HepG2 (cell line): ENCODE measurements at regions of chr20 and their contacts with region 1.

Region 1: DNA sequence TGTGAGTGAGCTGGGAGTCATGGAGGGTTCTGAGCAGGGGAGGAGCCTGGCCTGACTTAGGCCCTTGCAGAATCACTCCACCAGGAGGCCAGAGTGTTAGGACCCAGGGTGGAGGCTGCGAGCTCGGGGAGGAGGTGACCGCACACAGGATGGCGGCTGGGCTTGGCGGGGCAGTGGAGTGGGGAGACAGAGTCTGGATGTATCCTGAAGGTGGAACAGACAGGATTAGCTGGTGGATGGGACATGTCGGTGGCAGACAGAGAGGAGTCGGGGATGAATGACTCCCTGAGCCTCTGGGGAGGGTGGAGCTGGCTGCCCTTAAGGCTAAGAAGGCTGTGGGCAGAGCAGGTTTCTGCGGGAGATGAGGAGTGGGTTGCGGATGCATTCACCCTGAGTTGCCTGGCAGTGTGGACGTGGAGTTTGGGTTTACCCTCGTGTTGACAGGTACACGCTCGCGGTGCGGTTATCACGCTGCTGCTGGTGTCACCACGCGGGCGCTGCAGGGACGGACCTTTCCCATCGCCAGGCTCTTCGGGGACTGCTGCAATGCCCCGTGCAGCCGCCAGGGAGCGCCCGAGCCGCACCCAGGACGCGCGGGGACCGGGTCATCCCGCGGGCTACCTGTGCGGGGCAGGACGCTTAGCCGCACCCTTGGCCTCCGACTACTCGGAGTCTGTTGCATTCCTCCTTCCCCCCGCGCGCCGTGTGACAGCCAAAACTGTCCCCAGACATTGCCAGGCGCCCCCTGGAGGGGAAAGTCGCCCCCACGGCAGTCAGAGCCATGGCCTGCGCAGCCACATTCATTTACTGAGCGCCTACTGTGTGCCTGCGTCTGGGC is 43.0 kb upstream of the PTGIS start:
- DNase-seq: peak; percentile 87
- ATAC-seq: peak; percentile 82
- H3K4me3 ChIP-seq: peak overlapping the region; percentile 58 to 84 (median 63)
- H3K27ac ChIP-seq: no peak overlapping the region
- H3K4me1 ChIP-seq: peaks cover 67% of the 10 kb centered on the region
- H3K27me3 ChIP-seq: no peaks in the 10 kb centered on the region; a peak in 1 of 5 replicates
- CTCF ChIP-seq: peak; percentile 100
- EP300 ChIP-seq: peak; percentile 3 to 54; a peak in 1 of 4 replicates
- POLR2A ChIP-seq: no peak
- RAD21 ChIP-seq: peak; percentile 100

Region 2: GRCh38 chr20:49330544-49331239 is 280.2 kb before region 1 on chr20:
- CTCF ChIA-PET with region 1: interaction called, 14 read pairs
- POLR2A ChIA-PET with region 1: no interaction called
- in situ Hi-C with region 1: loop called (anchors 5 kb)
- intact Hi-C with region 1: loop called (anchors 10 kb)
- DNase-seq: no peak
- ATAC-seq: no peak
- H3K4me3 ChIP-seq: no peak overlapping the region
- H3K27ac ChIP-seq: no peak overlapping the region
- H3K4me1 ChIP-seq: no peaks in the 10 kb centered on the region
- H3K27me3 ChIP-seq: peaks cover 5 to 46% of the 10 kb centered on the region in 2 experiments; a peak in 4 of 5 replicates
- CTCF ChIP-seq: no peak
- EP300 ChIP-seq: no peak
- POLR2A ChIP-seq: no peak
- RAD21 ChIP-seq: no peak

Region 3: DNA sequence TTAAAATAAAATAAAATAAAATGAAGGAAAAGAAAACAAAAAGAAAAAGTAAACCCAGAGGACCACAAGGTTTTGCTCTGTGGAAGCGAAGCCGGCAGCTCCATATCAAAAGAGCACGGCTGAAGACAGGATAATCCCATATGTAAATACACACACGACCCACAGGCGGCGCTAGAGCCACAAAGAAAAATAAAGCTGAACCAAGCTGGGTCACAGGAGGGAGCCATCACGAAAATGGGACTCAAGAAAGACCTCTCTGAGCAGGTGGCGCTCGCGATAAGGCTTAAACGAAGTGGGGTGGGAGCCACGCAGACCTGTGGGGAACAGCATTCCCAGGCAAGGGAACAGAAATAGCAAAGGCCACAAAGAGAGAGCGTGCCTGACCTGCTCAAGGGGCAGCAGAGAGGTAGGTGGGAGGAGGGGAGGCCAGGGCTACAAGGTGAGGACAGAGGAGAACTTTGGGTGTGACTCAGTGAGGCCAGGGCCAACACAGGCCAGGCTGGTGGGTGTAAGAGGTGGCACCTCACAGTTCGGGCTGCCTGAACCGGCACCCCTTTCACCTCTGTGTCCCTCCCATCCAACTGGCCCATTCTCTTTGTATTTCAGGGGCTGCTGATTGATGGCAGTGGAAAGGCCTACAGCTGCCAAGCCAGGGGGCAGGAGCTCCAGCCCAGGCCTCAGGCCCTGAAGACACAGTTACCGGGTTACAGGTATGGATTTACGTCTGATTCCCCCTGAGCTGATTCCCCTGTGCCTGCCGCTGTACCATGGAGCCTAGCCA is 69.0 kb before region 1 on chr20:
- CTCF ChIA-PET with region 1: interaction called, 282 read pairs
- POLR2A ChIA-PET with region 1: interaction called, 13 read pairs
- in situ Hi-C with region 1: loop called (anchors 5 kb)
- intact Hi-C with region 1: loop called (anchors 1 kb)
- DNase-seq: peak; percentile 90
- ATAC-seq: peak; percentile 78
- H3K4me3 ChIP-seq: no peak overlapping the region
- H3K27ac ChIP-seq: no peak overlapping the region
- H3K4me1 ChIP-seq: peaks cover 13% of the 10 kb centered on the region
- H3K27me3 ChIP-seq: peaks cover 5 to 19% of the 10 kb centered on the region in 2 experiments; a peak in 3 of 5 replicates
- CTCF ChIP-seq: peak; percentile 99
- EP300 ChIP-seq: 0 out of 4 replicates have a peak, but pooled peaks of 1 of the 2 experiments have one; percentile 8
- POLR2A ChIP-seq: no peak
- RAD21 ChIP-seq: peak; percentile 97

Region 4: DNA sequence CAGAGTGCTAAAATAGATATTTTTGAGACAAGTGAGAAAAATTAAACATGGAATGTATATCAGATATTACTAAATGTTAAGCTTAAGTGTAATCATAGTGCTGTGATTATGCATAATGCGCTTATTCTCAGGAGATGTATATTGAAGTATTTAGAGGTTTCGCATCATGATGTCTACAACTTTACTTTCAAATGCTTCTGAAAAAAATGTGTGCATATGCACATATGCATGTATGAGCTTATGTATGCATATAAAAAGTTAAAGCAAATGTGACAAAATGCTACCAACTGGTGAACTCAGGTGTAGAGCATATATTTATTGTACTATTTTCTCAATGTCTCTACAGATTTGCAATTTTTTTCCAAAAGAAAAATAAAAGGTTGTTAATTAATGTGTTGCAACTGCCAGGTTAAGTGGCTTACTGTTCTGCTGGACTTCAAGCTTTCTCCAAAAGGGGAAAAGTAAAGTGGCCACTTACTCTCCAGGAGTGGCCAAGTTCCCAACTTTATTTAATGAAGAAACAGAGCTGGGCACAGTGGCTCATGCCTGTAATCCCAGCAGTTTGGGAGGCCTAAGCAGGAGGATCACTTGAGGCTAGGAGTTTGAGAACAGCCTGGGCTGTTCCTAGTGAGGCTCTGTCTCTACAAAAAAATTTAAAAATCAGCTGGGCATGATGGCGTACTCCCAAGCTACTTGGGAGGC is 53.8 kb after region 1 on chr20:
- CTCF ChIA-PET with region 1: no interaction called
- POLR2A ChIA-PET with region 1: no interaction called
- in situ Hi-C with region 1: no loop called
- intact Hi-C with region 1: no loop called
- DNase-seq: no peak
- ATAC-seq: no peak
- H3K4me3 ChIP-seq: no peak overlapping the region
- H3K27ac ChIP-seq: no peak overlapping the region
- H3K4me1 ChIP-seq: peaks cover 43% of the 10 kb centered on the region
- H3K27me3 ChIP-seq: no peaks in the 10 kb centered on the region
- CTCF ChIP-seq: no peak
- EP300 ChIP-seq: no peak
- POLR2A ChIP-seq: no peak
- RAD21 ChIP-seq: no peak

Region 5: DNA sequence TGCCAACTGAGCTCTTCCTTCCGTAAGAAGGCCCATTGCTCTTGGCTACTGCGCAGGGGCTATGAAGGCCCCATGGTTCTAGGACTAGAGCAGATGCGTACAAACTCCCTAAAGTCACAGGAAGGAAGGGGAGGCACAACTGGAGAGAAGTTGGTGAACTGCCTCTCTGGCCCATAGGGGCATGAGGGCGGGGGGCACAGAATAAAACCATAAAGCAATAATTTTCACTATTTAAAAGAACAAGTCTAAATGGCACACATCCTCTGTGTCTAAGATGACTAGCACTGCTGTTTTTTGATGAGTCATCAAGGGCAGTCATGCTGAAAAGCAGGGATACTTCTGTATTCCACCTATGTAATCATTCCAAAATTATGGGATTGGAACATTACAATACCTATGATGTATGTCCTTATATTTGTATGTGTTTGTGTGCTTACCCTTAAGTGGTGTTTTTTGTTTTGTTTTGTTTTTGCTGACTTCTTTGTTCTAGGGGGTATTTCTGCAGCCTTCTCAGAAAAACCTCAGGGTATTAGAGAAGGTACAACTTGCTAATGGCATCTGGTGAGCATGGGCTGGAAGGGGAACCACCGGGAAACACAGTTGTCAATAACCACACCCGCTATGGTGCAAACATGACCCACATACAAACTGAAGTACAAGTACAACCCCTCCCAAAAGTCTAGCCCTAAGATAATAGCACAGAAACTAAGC is 65.8 kb after region 1 on chr20:
- CTCF ChIA-PET with region 1: interaction called, 14 read pairs
- POLR2A ChIA-PET with region 1: interaction called, 7 read pairs
- in situ Hi-C with region 1: no loop called
- intact Hi-C with region 1: loop called (anchors 1 kb)
- DNase-seq: peak; percentile 50
- ATAC-seq: no peak
- H3K4me3 ChIP-seq: peak overlapping the region in 1 of 3 experiments; percentile 6; a peak in 1 of 6 replicates
- H3K27ac ChIP-seq: peak overlapping the region; percentile 93
- H3K4me1 ChIP-seq: peaks cover 96% of the 10 kb centered on the region
- H3K27me3 ChIP-seq: no peaks in the 10 kb centered on the region
- CTCF ChIP-seq: no peak
- EP300 ChIP-seq: 0 out of 4 replicates have a peak, but pooled peaks of 1 of the 2 experiments have one; percentile 21
- POLR2A ChIP-seq: no peak
- RAD21 ChIP-seq: no peak

Region 6: GRCh38 chr20:49812463-49813304 is 201.8 kb after region 1 on chr20 and contains the start of gene SLC9A8:
- CTCF ChIA-PET with region 1: interaction called, 11 read pairs
- POLR2A ChIA-PET with region 1: interaction called, 10 read pairs
- in situ Hi-C with region 1: no loop called
- intact Hi-C with region 1: loop called (anchors 1 kb)
- DNase-seq: peak; percentile 84
- ATAC-seq: peak; percentile 96
- H3K4me3 ChIP-seq: peak within 1 kb of the TSS; percentile 85 to 96 (median 95)
- H3K27ac ChIP-seq: peak within 1 kb of the TSS; percentile 77
- H3K4me1 ChIP-seq: peaks cover 31% of the 10 kb centered on the region
- H3K27me3 ChIP-seq: no peaks in the 10 kb centered on the region; a peak in 1 of 5 replicates
- CTCF ChIP-seq: peak; percentile 53
- EP300 ChIP-seq: peak in 1 of 2 experiments; percentile 46; a peak in 2 of 4 replicates
- POLR2A ChIP-seq: peak; percentile 74 to 91
- RAD21 ChIP-seq: peak; percentile 77
- total RNA-seq, gene SLC9A8: 2.6 and 7.4 TPM in 2 replicates

Region 7: DNA sequence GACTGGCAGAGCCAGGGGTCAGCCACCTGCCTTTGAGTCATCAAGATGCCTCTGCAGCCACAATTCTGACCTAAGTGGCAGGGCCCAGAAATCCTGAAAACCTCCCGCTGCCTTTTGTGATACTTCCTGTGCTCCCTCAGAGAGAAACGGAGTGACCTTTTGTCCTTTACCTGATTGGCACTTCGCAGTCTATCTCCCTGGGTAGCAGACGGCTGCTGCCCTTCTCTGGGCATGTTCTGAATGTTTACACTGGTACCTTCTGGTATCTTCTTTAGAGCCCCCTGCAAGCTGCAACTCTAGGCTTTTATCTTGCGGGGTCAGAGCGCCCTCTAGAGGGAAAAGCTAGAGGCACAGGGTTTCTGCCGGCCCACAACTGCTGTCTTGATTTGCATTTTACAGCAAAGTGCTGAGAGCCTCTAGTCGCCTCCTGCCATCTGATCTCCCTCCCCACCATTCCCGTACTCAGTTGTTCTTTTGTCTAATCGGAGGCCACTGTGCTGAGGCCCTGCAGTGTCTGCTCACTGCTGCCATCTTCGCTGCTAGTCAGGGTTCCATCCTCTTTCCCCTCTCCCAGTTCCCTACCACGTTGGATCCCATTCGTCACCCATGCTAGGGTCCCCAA is 277.5 kb after region 1 on chr20:
- CTCF ChIA-PET with region 1: interaction called, 74 read pairs
- POLR2A ChIA-PET with region 1: no interaction called
- in situ Hi-C with region 1: loop called (anchors 5 kb)
- intact Hi-C with region 1: loop called (anchors 1 kb)
- DNase-seq: peak; percentile 69
- ATAC-seq: peak; percentile 66
- H3K4me3 ChIP-seq: no peak overlapping the region
- H3K27ac ChIP-seq: no peak overlapping the region
- H3K4me1 ChIP-seq: peaks cover 14% of the 10 kb centered on the region
- H3K27me3 ChIP-seq: no peaks in the 10 kb centered on the region
- CTCF ChIP-seq: peak; percentile 89
- EP300 ChIP-seq: no peak
- POLR2A ChIP-seq: no peak
- RAD21 ChIP-seq: peak; percentile 91

Region 8: GRCh38 chr20:49909499-49910339 is 298.8 kb after region 1 on chr20:
- CTCF ChIA-PET with region 1: no interaction called
- POLR2A ChIA-PET with region 1: no interaction called
- in situ Hi-C with region 1: no loop called
- intact Hi-C with region 1: no loop called
- DNase-seq: peak; percentile 52
- ATAC-seq: peak; percentile 64
- H3K4me3 ChIP-seq: no peak overlapping the region
- H3K27ac ChIP-seq: peak overlapping the region; percentile 28
- H3K4me1 ChIP-seq: peaks cover 57% of the 10 kb centered on the region
- H3K27me3 ChIP-seq: no peaks in the 10 kb centered on the region; a peak in 1 of 5 replicates
- CTCF ChIP-seq: peak; percentile 54
- EP300 ChIP-seq: no peak
- POLR2A ChIP-seq: 0 out of 4 replicates have a peak, but pooled peaks of 1 of the 2 experiments have one; percentile 14
- RAD21 ChIP-seq: peak; percentile 53; the same call in 1 of the 2 replicates